Activated CD4-positive, alpha-beta T cell treated with anti-CD3 and anti-CD28 coated beads for 36 hours (primary cell): ENCODE measurements at regions of chr22 and their contacts with region 1.

Region 1: DNA sequence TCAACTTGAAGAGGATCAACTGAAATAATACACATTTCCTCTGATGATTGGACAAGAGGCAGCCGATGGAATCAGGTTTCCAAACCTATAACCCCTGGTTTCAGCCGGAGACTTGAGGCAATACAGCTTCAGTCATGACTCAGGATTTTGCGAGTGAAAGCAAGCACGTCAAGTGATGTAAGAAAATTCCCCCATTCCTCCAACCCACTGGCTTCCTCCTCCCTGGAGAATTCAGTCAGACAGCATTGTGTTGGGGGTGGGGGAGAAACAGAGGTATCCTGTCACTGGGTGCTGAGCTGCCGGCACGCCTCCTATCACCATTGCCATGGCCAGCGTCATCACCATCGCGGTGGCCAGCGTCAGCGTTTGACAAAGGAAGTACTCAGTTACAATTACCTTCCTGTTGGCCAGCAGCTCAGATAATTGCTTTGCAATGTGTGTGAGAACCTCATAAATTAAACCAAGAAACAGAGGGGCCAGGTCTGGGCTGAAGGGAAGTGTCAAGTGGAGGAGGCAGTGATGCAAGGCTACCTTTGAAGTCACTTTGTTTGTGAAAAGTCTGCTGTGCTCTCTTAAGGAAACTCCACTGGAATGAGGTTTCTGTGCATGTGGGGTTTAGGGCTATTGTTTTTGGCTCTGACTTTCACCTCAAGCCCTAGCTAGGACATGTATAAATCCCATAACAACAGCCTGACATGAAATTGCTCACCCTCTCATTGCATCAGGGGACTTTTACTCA is 50.2 kb downstream of the LIF start:
- DNase-seq: peak; percentile 66
- ATAC-seq: peak; percentile 75
- H3K4me3 Mint-ChIP-seq: peak overlapping the region; percentile 25
- H3K27ac Mint-ChIP-seq: peak overlapping the region; percentile 90
- H3K4me1 Mint-ChIP-seq: peaks cover 56% of the 10 kb centered on the region
- H3K27me3 Mint-ChIP-seq: no peaks in the 10 kb centered on the region

Region 2: DNA sequence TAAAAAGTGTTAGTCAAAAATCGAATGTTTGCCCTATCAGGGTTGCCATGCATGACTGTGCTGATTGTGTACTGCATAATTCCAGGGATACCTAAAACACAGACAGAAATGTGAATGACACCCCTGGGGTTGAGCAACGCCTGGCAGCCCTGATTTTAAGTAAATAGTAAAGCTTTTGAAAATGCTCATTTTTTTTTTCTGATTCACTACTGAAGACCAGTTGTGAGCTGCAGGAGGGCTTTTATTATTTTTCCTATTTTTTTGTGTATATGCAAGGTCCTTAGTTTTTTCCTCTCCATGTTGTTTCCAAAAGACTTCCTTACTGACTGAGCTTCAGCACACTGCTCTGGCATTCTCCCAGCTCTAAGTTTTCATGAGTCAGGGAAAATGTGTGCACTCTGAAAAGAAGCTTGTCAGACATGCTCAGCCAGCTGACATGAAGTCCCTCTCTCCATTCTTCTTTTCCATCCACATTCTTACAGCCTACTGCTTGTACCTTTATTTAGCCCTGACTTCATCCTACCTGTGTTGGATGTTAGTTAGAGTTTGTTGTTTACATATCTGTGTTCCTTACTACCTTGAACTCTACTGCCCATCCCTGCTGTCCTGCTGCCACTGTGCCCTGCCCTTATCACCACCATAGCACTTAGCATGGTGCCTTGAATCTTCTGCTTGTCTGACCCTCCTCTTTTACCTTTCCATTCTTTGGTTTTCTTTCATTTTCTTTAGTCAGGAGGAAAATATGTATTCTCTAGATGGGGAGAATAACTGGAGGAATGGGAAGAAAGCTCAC is 36.6 kb before region 1 on chr22:
- CTCF ChIA-PET with region 1: no interaction called
- POLR2A ChIA-PET with region 1: interaction called, 3 read pairs
- intact Hi-C with region 1: loop called in 1 of 2 experiments (anchors 5 kb)
- DNase-seq: peak; percentile 18
- ATAC-seq: peak; percentile 39
- H3K4me3 Mint-ChIP-seq: no peak overlapping the region
- H3K27ac Mint-ChIP-seq: peak overlapping the region; percentile 81
- H3K4me1 Mint-ChIP-seq: peaks cover 48% of the 10 kb centered on the region
- H3K27me3 Mint-ChIP-seq: peaks cover 4% of the 10 kb centered on the region

Region 3: GRCh38 chr22:30169002-30169401 is 27.3 kb before region 1 on chr22:
- CTCF ChIA-PET with region 1: interaction called, 5 read pairs
- POLR2A ChIA-PET with region 1: no interaction called
- intact Hi-C with region 1: loop called (anchors 2 to 5 kb)
- DNase-seq: no peak
- ATAC-seq: peak; percentile 47
- H3K4me3 Mint-ChIP-seq: no peak overlapping the region
- H3K27ac Mint-ChIP-seq: no peak overlapping the region
- H3K4me1 Mint-ChIP-seq: no peaks in the 10 kb centered on the region
- H3K27me3 Mint-ChIP-seq: no peaks in the 10 kb centered on the region

Region 4: DNA sequence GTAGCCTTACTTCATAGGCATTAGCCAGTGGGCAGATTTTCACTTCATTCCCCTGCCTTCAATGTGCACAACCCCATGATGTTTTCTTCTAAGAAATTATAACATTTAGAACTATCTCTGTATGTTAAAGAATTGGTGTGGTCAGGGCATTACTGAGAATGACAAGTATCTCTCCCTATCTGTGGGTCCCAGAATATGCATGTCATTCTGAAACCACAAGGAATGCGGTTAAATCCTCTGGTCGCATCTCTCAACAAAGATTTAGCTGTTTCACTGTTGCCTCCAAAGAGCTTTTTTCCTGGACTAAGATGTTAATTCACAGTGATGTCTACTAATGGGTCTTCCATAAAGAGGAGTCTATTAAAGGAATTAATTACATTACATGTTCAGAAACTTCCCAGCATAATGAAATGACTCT is 12.4 kb before region 1 on chr22:
- CTCF ChIA-PET with region 1: interaction called, 8 read pairs
- POLR2A ChIA-PET with region 1: interaction called, 8 read pairs
- intact Hi-C with region 1: loop called in 1 of 2 experiments (anchors 2 kb)
- DNase-seq: no peak
- ATAC-seq: peak; percentile 57
- H3K4me3 Mint-ChIP-seq: peak overlapping the region; percentile 8
- H3K27ac Mint-ChIP-seq: peak overlapping the region; percentile 84
- H3K4me1 Mint-ChIP-seq: peaks cover 89% of the 10 kb centered on the region
- H3K27me3 Mint-ChIP-seq: no peaks in the 10 kb centered on the region

Region 5: DNA sequence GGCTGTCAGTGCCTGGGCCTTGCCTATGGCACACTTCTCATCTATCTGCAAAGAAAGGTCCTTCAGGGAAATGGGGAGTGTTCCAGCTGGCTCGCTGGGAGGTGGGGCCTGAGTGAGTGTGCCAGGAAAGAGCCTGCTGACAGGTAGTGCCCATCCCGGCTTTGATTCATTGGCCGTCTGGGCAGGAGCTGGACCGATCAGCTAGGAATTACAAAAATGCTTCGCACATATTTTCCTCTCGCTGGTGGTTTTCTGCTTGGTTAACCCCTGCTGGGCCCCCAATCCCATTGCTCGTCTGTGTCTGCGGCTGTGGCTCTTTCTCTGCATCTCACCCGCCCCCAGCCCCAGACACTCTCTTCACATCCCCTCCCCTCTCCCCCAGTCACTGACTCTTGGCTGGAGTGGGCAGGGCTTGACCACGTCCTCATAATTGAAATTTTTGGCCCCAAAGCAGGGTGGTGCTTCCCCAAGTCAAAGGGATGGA is 39.4 kb after region 1 on chr22:
- CTCF ChIA-PET with region 1: no interaction called
- POLR2A ChIA-PET with region 1: interaction called, 8 read pairs
- intact Hi-C with region 1: loop called in 1 of 2 experiments (anchors 5 kb)
- DNase-seq: no peak
- ATAC-seq: no peak
- H3K4me3 Mint-ChIP-seq: no peak overlapping the region
- H3K27ac Mint-ChIP-seq: no peak overlapping the region
- H3K4me1 Mint-ChIP-seq: no peaks in the 10 kb centered on the region
- H3K27me3 Mint-ChIP-seq: no peaks in the 10 kb centered on the region

Region 6: GRCh38 chr22:30694171-30694639 is 497.9 kb after region 1 on chr22:
- CTCF ChIA-PET with region 1: no interaction called
- POLR2A ChIA-PET with region 1: no interaction called
- intact Hi-C with region 1: no loop called
- DNase-seq: peak; percentile 72
- ATAC-seq: peak; percentile 76
- H3K4me3 Mint-ChIP-seq: peak overlapping the region; percentile 79
- H3K27ac Mint-ChIP-seq: peak overlapping the region; percentile 74
- H3K4me1 Mint-ChIP-seq: peaks cover 5% of the 10 kb centered on the region
- H3K27me3 Mint-ChIP-seq: peaks cover 18% of the 10 kb centered on the region